HAP-1 (cell line): ENCODE measurements at regions of chr3 and their contacts with region 1.

Region 1: DNA sequence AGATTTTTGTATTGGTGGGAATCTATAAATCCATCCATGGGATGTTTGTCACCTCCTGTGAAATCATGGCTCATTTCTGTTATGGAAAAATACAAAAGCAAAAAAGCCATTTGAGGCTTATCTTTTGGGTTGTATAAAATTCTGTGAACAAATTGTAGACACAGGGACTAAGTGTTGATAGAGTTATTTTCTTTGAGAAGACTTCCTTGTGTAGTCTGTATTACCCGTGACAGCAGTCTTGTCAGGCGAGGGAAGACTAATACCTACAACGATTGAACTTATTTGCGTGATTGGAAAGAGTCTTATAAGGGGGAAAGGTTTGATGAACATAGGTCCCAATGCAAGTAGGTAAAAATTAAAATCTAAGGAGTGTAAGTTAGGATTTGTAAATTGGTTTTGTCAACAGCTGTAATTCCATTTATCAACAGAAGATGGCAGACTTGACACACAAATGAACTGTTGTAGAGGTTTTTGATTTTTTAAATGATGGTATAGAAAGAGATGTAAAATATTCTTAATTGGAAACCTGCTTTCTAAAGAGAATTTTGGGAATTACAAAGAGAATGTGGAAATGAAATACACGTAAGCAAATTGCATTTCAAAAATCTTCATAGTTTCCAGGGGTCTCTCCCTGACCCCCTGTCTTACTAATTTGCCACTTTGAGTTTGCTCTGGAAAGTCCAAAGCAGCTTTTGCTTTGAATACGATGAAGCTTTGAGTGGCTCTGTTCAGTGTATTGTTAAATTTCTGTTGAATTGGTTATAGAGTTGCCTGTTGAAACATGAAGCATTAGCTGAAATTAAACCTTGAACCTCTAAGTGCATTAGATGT is 33.2 kb downstream of the SLC25A26 start:
- DNase-seq: peak in 1 of 2 experiments; percentile 25
- H3K4me3 ChIP-seq: no peak overlapping the region
- H3K4me1 ChIP-seq: no peaks in the 10 kb centered on the region
- H3K27me3 ChIP-seq: no peaks in the 10 kb centered on the region

Region 2: DNA sequence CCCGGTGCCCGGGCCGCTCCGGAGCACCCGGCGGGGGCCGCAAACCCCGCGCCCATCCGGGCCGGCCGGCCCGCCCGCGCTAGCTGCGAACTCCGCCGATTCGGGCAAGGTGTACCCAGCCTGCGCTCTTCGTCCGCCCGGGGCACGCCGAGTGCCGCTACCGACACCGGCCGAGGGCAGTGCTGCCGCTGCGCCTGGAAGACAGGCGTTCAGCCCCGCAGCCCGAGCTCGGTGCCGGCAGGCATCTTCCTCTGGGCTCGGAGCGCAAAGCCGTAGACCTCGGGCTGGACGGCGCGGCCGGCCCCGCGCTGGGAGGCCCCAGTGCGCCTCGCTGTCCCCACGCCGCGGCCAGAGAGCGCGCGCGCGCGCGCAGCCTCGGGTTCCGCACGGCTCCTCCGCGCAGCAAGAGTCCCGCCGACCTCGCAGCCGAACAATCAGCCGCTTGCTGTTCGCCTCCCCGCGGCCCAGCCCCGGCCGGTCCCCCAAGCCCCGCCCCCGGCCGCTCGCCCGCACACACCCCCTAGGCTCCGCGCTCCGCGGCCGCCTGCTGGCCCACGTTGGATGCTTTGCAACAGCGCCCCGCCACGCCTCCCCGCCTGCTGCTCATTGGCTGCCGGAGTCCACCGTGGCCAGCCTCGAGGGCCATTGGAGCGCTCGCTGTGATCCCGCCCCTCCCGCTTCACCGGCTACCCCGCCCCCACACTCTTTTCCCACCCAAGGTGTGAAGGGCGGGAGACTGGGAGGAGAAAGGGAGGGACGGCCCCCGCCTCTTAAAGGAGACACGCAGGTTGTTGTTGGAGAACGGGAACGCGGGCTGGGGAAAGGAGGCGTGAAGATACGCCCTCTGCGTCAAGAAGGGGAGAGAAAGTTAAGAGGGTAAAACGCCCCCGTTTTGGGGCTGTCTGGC is 246.8 kb after region 1 on chr3 and contains the start of gene LRIG1:
- in situ Hi-C with region 1: no loop called
- DNase-seq: peak; percentile 97 to 100
- H3K4me3 ChIP-seq: peak within 1 kb of the TSS; percentile 59
- H3K4me1 ChIP-seq: peaks cover 45% of the 10 kb centered on the region
- H3K27me3 ChIP-seq: peaks cover 5% of the 10 kb centered on the region; the same call in 1 of the 2 replicates

Region 3: DNA sequence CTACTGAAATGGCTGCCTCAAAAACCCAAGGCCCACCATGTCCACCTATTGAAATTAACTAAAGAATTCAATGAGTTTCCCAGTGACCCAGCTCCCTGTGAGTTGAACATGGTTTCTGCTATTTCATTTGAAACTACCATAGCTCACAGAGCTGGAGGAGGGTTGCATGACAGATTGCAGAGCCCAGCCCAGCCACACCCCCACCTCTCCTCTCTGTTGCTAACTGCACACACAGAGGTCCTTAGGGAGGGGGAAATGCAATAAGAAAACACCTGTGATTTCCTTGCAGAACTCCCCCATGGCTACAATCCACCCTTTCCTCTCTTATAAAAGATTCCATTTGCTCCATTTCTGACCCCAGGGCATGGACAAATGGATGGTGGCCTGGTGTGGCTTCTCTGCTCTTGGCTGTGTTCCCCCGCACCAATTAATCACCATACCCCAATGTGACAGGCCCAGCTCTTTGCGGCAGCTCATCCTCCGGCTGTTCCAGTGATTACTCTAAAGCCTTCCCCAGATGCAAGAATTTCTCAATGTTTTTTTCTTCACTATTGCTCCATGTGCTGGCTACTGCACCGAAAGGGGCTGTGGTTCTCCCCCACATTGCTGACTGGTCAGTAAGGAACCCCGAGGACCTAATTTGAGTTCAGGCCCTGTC is 535.7 kb after region 1 on chr3:
- in situ Hi-C with region 1: no loop called
- DNase-seq: no peak
- H3K4me3 ChIP-seq: no peak overlapping the region
- H3K4me1 ChIP-seq: no peaks in the 10 kb centered on the region
- H3K27me3 ChIP-seq: no peaks in the 10 kb centered on the region

Region 4: DNA sequence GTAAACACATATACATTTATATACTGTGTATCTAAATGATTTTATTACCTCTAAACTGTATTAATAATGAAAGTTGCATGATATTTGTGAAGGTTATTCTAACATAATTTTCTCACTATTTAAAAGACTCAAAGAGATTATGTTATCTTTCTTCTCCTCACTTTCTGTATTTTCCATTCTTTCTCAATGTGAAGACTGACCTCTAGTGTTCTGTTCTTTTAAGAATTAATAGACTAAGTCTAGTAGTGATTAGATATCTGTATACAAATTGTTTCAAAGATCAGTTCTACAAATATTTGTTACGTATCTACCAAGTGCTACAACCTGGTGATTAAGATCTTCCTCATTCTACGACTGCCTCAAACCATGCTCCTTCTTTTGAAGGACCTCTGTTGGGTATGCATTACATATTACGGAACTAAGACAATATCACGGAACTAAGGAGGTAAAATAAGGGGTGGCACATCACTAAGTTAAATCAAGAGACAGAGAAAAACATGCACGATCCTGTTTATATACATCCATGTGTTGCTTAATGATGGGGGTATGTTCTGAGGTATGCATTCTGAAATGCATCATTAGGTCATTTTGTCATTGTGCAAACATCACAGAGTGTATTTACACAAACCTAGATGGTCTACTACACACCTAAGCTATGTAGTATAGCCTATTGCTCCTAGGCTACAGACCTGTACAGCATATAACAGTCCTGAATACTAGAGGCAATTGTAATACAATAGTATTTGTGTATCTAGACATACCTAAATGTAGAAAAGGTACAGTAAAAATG is 582.6 kb after region 1 on chr3:
- in situ Hi-C with region 1: loop called (anchors 10 kb)
- DNase-seq: peak in 1 of 2 experiments; percentile 32
- H3K4me3 ChIP-seq: no peak overlapping the region
- H3K4me1 ChIP-seq: no peaks in the 10 kb centered on the region
- H3K27me3 ChIP-seq: no peaks in the 10 kb centered on the region